ENCODE measurements at regions of chr14 and their contacts with region 1.

Region 1: GRCh38 chr14:91114079-91115065 is 499 bp downstream of the DGLUCY start:
- DNase-seq: no peak

Region 2: DNA sequence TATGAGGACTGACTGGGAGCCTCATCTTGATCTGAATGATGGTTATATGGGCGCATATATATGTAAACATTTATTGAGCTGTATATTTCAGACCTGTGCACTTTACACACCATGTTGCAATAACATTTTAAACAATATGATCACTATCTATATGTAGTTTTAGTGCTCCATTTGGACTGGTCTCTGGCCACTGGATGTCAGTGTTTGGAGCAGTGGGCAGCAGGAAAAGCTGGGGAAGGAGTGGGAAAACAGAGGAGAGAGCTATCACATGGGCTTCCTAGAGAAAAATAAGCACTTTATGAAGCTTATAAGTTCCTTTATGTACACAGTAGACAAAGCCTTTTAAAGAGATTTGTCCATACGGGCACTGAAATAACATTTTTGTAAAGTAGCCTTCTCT is 248.9 kb before region 1 on chr14:
- CTCF ChIA-PET with region 1: no interaction called
- POLR2A ChIA-PET with region 1: no interaction called
- DNase-seq: no peak

Region 3: GRCh38 chr14:91038438-91038837 is 75.9 kb before region 1 on chr14:
- CTCF ChIA-PET with region 1: no interaction called
- POLR2A ChIA-PET with region 1: no interaction called
- DNase-seq: no peak

Region 4: GRCh38 chr14:91060351-91061055 is 53.9 kb before region 1 on chr14 and contains the start of gene RPS6KA5:
- CTCF ChIA-PET with region 1: no interaction called
- POLR2A ChIA-PET with region 1: interaction called, 30 read pairs
- DNase-seq: peak; percentile 93

Region 5: DNA sequence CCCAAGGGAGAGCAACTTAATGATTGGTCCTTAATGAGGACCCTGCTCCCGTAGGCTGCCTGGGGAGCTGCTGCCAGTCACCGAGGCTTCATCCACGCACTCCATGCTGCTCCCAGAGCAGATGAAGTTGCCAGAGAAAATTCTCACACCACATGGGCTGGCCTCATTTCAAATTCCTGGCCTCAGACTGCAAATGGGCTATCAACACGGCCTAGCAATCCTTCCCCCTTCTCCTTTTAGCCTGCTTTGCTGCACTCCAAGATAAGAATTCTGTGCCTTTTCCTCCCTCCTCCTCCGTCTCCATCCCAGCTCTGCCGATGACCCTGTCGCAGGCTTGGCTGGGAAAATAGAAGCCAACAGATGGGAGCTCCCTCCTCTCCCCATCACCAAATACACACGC is 11.3 kb before region 1 on chr14:
- CTCF ChIA-PET with region 1: no interaction called
- POLR2A ChIA-PET with region 1: interaction called, 12 read pairs
- DNase-seq: no peak